ENCODE measurements at regions of chr14 and their contacts with region 1.

Region 1: GRCh38 chr14:25150934-25151790 is 101.2 kb upstream of the STXBP6 start:
- DNase-seq: peak in 1 of 2 experiments; percentile 15
- H3K4me3 ChIP-seq: no peak overlapping the region
- H3K4me3 Mint-ChIP-seq: no peak overlapping the region
- H3K27ac Mint-ChIP-seq: no peak overlapping the region
- H3K4me1 ChIP-seq: no peaks in the 10 kb centered on the region
- H3K4me1 Mint-ChIP-seq: no peaks in the 10 kb centered on the region
- H3K27me3 ChIP-seq: no peaks in the 10 kb centered on the region
- H3K27me3 Mint-ChIP-seq: peaks cover 2% of the 10 kb centered on the region
- CTCF ChIP-seq: peak; percentile 68 to 71

Region 2: DNA sequence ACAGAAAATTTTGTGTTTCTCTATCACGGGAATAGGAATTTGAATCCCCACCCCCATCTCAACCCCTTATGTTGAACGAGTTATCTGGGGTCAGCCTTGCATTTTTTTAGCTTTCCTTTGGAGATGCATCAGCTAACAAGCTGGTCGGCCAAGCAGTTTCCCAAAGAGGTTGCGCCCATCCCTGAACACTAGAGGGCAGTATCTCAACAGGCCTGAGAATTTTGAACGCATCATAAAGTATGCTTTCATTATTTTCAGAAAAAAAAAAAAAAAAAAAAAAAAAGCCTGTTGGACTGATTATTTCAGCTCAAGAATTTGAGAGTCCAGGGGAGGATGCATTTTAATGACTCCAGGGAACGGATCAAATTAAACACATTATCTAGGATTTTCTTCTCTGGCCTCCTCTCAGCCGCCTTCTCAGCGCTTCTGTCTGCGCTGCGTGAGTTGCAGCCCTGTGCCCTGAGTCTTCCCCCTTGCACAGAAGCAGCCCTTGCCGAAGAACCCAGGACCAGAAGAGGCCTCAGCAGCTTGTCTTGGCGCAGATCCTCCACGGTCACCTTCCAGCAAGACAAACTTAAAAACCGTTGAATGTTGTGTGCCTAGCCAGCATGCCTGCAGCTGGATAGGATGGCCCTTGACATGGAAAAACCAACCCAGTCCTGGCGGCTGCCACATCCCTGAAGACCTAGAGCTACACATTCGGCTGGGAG is 440.6 kb before region 1 on chr14:
- CTCF ChIA-PET with region 1: interaction called, 6 read pairs
- POLR2A ChIA-PET with region 1: no interaction called
- intact Hi-C with region 1: loop called (anchors 1 kb)
- DNase-seq: peak; percentile 61 to 71
- H3K4me3 ChIP-seq: no peak overlapping the region
- H3K4me3 Mint-ChIP-seq: no peak overlapping the region
- H3K27ac Mint-ChIP-seq: no peak overlapping the region
- H3K4me1 ChIP-seq: no peaks in the 10 kb centered on the region
- H3K4me1 Mint-ChIP-seq: no peaks in the 10 kb centered on the region
- H3K27me3 ChIP-seq: no peaks in the 10 kb centered on the region
- H3K27me3 Mint-ChIP-seq: peaks cover 9% of the 10 kb centered on the region
- CTCF ChIP-seq: peak; percentile 80 to 91

Region 3: GRCh38 chr14:24734878-24735500 is 416.2 kb before region 1 on chr14:
- CTCF ChIA-PET with region 1: no interaction called
- POLR2A ChIA-PET with region 1: no interaction called
- intact Hi-C with region 1: loop called (anchors 1 kb)
- DNase-seq: peak; percentile 42 to 66
- H3K4me3 ChIP-seq: no peak overlapping the region
- H3K4me3 Mint-ChIP-seq: no peak overlapping the region
- H3K27ac Mint-ChIP-seq: no peak overlapping the region
- H3K4me1 ChIP-seq: no peaks in the 10 kb centered on the region
- H3K4me1 Mint-ChIP-seq: no peaks in the 10 kb centered on the region
- H3K27me3 ChIP-seq: no peaks in the 10 kb centered on the region
- H3K27me3 Mint-ChIP-seq: no peaks in the 10 kb centered on the region
- CTCF ChIP-seq: peak; percentile 69 to 70

Region 4: DNA sequence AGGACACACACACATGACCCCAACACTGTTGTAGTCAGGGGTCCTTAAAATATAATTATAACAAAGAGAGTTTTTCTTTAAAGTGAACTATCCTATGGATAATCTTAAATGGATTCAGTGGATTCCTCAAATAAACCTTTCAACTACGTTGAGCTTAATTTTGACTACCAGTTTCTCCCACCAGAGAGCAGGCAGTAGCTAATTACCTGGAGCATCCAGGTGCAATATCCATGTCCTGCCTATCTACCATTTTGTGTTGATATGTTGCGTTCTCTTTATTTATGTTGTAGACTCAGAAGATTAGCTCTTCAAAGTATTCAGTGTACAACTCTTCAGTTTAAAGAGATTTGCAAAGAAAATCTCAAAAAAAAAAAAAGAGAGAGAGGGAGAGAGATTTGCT is 390.0 kb before region 1 on chr14:
- CTCF ChIA-PET with region 1: no interaction called
- POLR2A ChIA-PET with region 1: no interaction called
- intact Hi-C with region 1: loop called (anchors 1 kb)
- DNase-seq: peak in 1 of 2 experiments; percentile 20
- H3K4me3 ChIP-seq: no peak overlapping the region
- H3K4me3 Mint-ChIP-seq: no peak overlapping the region
- H3K27ac Mint-ChIP-seq: no peak overlapping the region
- H3K4me1 ChIP-seq: no peaks in the 10 kb centered on the region
- H3K4me1 Mint-ChIP-seq: no peaks in the 10 kb centered on the region
- H3K27me3 ChIP-seq: no peaks in the 10 kb centered on the region
- H3K27me3 Mint-ChIP-seq: peaks cover 8% of the 10 kb centered on the region
- CTCF ChIP-seq: peak in 1 of 2 experiments; percentile 47

Region 5: DNA sequence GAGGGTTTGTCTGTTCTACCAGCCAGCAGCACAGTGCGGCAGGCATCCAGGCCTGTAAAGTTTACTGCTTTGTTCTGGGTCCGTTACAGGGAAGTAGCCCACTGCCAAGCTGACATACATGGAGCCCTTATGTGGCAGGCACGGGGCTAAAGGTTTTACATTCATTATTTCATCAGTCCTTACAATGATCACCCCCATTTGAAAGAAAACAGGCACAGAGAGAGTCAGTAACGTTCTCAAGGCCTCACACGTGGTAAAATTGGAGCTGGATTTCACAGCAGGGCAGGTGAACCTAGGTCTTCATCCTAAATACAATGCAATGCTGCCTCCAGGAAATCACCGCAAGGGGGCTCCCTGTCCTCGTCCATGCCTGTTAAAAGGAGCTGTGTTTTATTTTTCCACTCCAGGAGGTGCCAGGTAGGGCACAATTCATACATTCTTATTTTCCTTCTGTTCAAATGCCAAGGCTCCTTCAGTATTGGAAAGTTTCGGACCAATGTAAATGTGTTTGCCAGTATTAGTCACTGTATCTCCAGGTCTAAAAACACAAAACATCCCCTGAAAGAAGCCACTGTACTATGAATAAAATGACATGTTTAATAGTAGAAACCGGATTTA is 345.0 kb before region 1 on chr14:
- CTCF ChIA-PET with region 1: interaction called, 3 read pairs
- POLR2A ChIA-PET with region 1: no interaction called
- intact Hi-C with region 1: loop called (anchors 1 kb)
- DNase-seq: peak; percentile 73 to 82
- H3K4me3 ChIP-seq: no peak overlapping the region
- H3K4me3 Mint-ChIP-seq: no peak overlapping the region
- H3K27ac Mint-ChIP-seq: peak overlapping the region; percentile 41
- H3K4me1 ChIP-seq: peaks cover 48% of the 10 kb centered on the region
- H3K4me1 Mint-ChIP-seq: peaks cover 22% of the 10 kb centered on the region
- H3K27me3 ChIP-seq: no peaks in the 10 kb centered on the region
- H3K27me3 Mint-ChIP-seq: no peaks in the 10 kb centered on the region
- CTCF ChIP-seq: peak; percentile 83 to 86

Region 6: GRCh38 chr14:25049568-25050268 is 101.4 kb before region 1 on chr14 and contains the start of gene STXBP6:
- CTCF ChIA-PET with region 1: interaction called, 5 read pairs
- POLR2A ChIA-PET with region 1: no interaction called
- intact Hi-C with region 1: loop called (anchors 5 kb)
- DNase-seq: peak; percentile 74 to 85
- H3K4me3 ChIP-seq: peak within 1 kb of the TSS; percentile 87
- H3K4me3 Mint-ChIP-seq: peak within 1 kb of the TSS; percentile 84
- H3K27ac Mint-ChIP-seq: peak within 1 kb of the TSS; percentile 76
- H3K4me1 ChIP-seq: peaks cover 10% of the 10 kb centered on the region; the same call in 1 of the 2 replicates
- H3K4me1 Mint-ChIP-seq: peaks cover 11% of the 10 kb centered on the region
- H3K27me3 ChIP-seq: no peaks in the 10 kb centered on the region
- H3K27me3 Mint-ChIP-seq: no peaks in the 10 kb centered on the region
- CTCF ChIP-seq: no peak
- total RNA-seq, gene STXBP6: 32.2 and 35.7 TPM in 2 replicates

Region 7: GRCh38 chr14:25400607-25401206 is 249.5 kb after region 1 on chr14:
- CTCF ChIA-PET with region 1: no interaction called
- POLR2A ChIA-PET with region 1: no interaction called
- intact Hi-C with region 1: loop called (anchors 10 kb)
- DNase-seq: peak; percentile 46 to 52
- H3K4me3 ChIP-seq: no peak overlapping the region
- H3K4me3 Mint-ChIP-seq: no peak overlapping the region
- H3K27ac Mint-ChIP-seq: no peak overlapping the region
- H3K4me1 ChIP-seq: no peaks in the 10 kb centered on the region
- H3K4me1 Mint-ChIP-seq: no peaks in the 10 kb centered on the region
- H3K27me3 ChIP-seq: no peaks in the 10 kb centered on the region
- H3K27me3 Mint-ChIP-seq: peaks cover 6% of the 10 kb centered on the region
- CTCF ChIP-seq: peak; percentile 66 to 70

Measured in Caco-2 (cell line).